ENCODE measurements at regions of chr10 and their contacts with region 1.

Region 1: GRCh38 chr10:70815504-70816219 is at the start of gene SGPL1:
- DNase-seq: peak; percentile 90
- ATAC-seq: peak; percentile 96 to 99
- H3K4me3 ChIP-seq: peak within 1 kb of the TSS; percentile 73
- H3K27ac ChIP-seq: peak within 1 kb of the TSS; percentile 83
- H3K4me1 ChIP-seq: peaks cover 24% of the 10 kb centered on the region
- H3K27me3 ChIP-seq: no peaks in the 10 kb centered on the region
- CTCF ChIP-seq: peak; percentile 95
- total RNA-seq, gene SGPL1: 41.2 TPM

Region 2: GRCh38 chr10:70880077-70880534 is 64.4 kb after region 1 on chr10:
- intact Hi-C with region 1: loop called (anchors 10 kb)
- DNase-seq: peak; percentile 74
- ATAC-seq: peak; percentile 84 to 93
- H3K4me3 ChIP-seq: no peak overlapping the region
- H3K27ac ChIP-seq: no peak overlapping the region
- H3K4me1 ChIP-seq: no peaks in the 10 kb centered on the region
- H3K27me3 ChIP-seq: no peaks in the 10 kb centered on the region
- CTCF ChIP-seq: peak; percentile 92

Region 3: GRCh38 chr10:71390461-71390835 is 574.8 kb after region 1 on chr10:
- intact Hi-C with region 1: no loop called
- DNase-seq: no peak
- ATAC-seq: no peak
- H3K4me3 ChIP-seq: no peak overlapping the region
- H3K27ac ChIP-seq: no peak overlapping the region
- H3K4me1 ChIP-seq: no peaks in the 10 kb centered on the region
- H3K27me3 ChIP-seq: peaks cover 14% of the 10 kb centered on the region
- CTCF ChIP-seq: no peak

Measured in lower lobe of right lung (tissue), 2 donors.